ENCODE measurements at regions of chr6 and their contacts with region 1.

Region 1: DNA sequence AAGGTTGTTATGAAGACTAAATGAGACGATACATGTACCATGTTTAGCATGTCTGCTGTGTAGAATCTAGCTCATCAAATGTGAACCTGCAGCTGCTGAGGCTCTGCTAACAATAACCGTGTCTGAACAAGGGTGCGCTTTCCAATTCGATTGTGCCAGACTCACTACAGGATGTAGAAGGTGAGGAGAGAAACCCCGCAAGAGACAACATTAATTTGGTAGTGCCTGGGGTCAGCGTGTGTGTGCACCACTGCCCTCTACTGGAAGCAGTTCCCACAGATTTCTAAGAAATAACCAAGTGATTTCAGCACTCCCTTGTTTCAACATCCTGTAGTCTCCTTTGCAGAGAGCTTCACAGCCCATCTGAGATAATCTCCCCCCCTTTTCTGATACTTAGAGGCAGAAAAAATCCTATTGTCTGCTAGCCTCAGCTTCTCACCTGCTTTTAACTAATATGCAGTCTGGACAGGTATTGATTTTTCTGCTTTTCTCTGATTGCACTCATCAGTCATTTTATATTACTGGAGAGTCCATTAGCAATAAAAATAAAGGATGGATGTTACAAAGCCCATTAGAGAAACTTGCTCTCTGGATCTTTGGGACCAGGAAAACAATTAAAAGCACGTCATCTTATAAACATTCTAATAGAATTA is 96.7 kb upstream of the BACH2 start:
- DNase-seq: peak; percentile 85
- H3K4me3 Mint-ChIP-seq: no peak overlapping the region
- H3K27ac Mint-ChIP-seq: peak overlapping the region; percentile 71
- H3K4me1 Mint-ChIP-seq: peaks cover 78% of the 10 kb centered on the region
- H3K27me3 Mint-ChIP-seq: no peaks in the 10 kb centered on the region

Region 2: DNA sequence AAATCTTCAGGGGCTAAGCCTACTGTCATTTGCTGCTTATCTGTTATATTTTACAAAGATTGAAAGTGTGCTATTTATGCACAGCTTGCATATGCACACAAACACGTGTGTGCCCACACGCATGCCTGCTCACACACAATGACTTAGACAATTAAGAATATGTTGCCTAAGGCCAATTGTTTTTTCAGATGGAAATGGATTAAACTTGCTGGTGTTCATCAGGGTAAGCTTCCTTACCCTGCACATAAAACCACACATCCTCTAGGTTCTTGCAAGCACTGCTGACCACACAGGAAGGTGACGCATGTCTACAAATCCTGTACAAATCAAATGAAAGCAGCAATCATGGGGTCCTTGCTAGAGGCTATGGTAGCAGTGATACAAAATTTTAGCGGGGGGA is 440.7 kb before region 1 on chr6:
- CTCF ChIA-PET with region 1: interaction called, 3 read pairs
- POLR2A ChIA-PET with region 1: no interaction called
- intact Hi-C with region 1: loop called (anchors 2 kb)
- DNase-seq: peak; percentile 72
- H3K4me3 Mint-ChIP-seq: peak overlapping the region; percentile 8
- H3K27ac Mint-ChIP-seq: peak overlapping the region; percentile 69
- H3K4me1 Mint-ChIP-seq: peaks cover 68% of the 10 kb centered on the region
- H3K27me3 Mint-ChIP-seq: no peaks in the 10 kb centered on the region

Region 3: DNA sequence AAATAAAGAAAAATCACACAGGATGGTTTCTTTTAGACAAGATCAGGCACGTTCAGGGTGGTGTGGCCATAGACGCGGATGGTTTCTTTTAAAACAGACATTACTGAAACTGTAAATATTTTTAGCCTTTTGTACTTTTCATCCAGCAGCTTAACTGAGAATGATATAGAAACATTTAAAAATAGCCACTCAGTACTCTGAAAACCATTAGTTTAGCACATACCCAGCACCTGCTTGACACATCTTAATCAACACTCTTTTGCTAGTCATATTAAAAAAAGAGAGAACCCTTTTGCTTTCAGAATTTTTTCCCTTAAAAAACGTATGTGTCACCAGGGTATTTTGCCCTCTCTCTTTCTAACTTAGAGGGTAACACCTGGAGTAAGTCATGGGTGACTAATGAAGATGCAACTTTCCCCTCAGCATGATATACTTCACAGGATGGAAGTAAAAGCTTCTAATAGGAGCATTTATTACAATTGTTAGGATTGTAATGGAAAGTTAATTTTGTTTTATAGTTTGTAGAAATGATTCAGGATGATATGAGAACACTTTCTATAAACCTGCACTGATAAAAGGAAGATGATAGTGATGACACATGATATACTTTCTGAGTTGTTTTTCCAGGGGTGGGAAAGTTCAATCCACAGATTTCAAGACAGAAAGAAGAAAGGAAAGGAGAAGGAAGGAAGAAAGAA is 141.9 kb before region 1 on chr6:
- CTCF ChIA-PET with region 1: interaction called, 3 read pairs
- POLR2A ChIA-PET with region 1: no interaction called
- intact Hi-C with region 1: loop called (anchors 1 kb)
- DNase-seq: no peak
- H3K4me3 Mint-ChIP-seq: no peak overlapping the region
- H3K27ac Mint-ChIP-seq: peak overlapping the region; percentile 83
- H3K4me1 Mint-ChIP-seq: peaks cover 80% of the 10 kb centered on the region
- H3K27me3 Mint-ChIP-seq: no peaks in the 10 kb centered on the region

Region 4: DNA sequence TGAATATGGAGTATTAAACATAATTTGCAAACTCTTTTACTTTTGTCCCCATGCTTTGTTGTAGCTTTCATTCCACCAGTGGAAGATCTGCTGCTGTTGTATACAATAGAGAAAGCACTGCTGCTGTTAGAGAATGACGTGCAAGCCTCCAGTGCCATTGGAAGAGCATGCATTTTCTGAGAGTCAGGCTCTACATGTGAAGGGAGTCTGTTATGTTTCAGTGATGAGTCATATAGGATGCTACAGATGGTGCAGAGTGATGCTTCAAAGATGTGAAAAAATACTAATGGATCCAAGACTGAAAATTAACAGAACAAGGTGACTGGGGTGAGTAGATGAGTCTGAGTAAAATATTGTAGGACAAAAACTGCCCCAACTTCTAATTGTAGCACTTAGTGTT is 74.3 kb before region 1 on chr6:
- CTCF ChIA-PET with region 1: interaction called, 8 read pairs
- POLR2A ChIA-PET with region 1: interaction called, 5 read pairs
- intact Hi-C with region 1: loop called (anchors 1 kb)
- DNase-seq: peak; percentile 51
- H3K4me3 Mint-ChIP-seq: no peak overlapping the region
- H3K27ac Mint-ChIP-seq: peak overlapping the region; percentile 59
- H3K4me1 Mint-ChIP-seq: peaks cover 29% of the 10 kb centered on the region
- H3K27me3 Mint-ChIP-seq: peaks cover 3% of the 10 kb centered on the region

Region 5: DNA sequence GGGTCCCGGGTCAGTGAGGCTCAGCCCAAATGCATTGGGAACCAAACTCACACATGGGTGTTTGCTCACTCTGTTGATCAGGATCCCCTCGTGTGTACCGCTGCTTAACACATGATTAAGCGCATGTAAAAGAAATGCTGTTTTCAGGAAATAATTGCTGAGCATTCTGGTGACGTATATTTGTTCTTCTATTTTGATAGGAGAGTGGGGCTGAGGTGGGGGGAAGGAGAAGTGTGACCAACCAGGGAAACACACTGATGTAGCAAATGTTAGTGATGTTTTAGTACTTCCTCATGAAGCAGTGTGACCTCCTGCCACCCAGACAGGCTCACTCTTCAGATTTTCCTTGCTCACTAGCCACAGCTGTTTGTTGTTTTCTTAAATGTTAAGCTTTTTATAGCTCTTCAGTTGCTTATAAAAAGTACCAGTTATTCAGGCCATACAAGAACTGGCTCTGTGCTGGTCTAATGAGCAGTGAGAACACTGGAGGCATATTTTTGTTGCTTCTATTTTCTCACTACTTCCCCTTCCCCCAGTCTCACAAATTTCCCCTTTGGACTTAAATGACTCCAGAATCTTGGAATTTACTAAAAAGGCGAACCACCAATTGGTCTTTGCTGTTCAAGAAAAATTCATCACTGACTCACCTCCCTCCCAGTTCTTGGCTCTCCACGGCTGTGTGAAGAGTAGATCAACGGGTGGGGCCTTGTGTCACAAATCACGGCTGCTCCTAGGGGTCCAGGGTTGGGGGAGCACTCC is 17.5 kb before region 1 on chr6:
- CTCF ChIA-PET with region 1: interaction called, 15 read pairs
- POLR2A ChIA-PET with region 1: no interaction called
- intact Hi-C with region 1: no loop called
- DNase-seq: no peak
- H3K4me3 Mint-ChIP-seq: no peak overlapping the region
- H3K27ac Mint-ChIP-seq: no peak overlapping the region
- H3K4me1 Mint-ChIP-seq: peaks cover 1% of the 10 kb centered on the region
- H3K27me3 Mint-ChIP-seq: no peaks in the 10 kb centered on the region

Region 6: DNA sequence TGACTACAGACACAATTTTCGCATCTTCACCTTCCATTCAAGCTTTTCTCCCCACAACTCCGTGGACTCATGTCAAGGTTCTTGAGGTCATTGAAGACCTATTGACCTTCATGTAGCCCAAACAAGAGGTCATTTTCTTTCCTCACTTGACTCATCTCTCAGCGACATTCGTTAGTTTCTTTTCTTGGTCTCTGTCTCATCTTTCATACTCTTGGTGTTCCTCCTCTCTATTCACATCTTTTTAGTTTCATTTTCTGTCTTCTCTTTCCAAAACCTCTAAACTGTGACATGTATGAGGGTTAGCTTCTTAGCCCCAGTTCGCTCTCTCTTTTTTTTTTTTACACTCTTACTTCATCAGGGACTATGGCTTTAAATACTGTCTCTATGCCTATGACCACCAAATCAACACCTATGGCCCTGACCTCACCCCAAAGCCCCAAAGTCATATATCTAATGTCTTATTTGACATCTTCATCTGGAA is 31.8 kb after region 1 on chr6:
- CTCF ChIA-PET with region 1: interaction called, 20 read pairs
- POLR2A ChIA-PET with region 1: interaction called, 56 read pairs
- intact Hi-C with region 1: loop called (anchors 1 kb)
- DNase-seq: peak; percentile 52
- H3K4me3 Mint-ChIP-seq: peak overlapping the region; percentile 59
- H3K27ac Mint-ChIP-seq: peak overlapping the region; percentile 95
- H3K4me1 Mint-ChIP-seq: peaks cover 38% of the 10 kb centered on the region
- H3K27me3 Mint-ChIP-seq: no peaks in the 10 kb centered on the region

Region 7: DNA sequence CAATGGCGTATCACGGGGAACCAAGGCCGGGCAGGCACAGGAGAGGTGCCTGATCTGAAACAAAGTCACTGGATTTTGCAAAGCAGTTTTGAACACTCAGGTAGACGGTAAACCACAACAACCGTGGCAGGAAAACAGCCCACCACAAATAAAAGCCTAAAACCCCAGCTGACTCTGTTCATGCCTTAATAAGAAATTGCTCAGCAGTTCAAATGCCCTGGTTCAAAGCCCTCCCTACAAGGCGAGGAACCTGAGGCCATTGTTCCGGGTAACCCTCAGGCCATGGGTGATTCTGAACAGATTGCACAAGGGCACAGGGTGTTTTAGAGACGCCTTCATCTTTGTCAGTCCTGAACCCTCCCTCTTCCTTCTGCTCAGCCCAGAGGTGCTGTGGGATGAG is 79.4 kb after region 1 on chr6:
- CTCF ChIA-PET with region 1: interaction called, 50 read pairs
- POLR2A ChIA-PET with region 1: interaction called, 63 read pairs
- intact Hi-C with region 1: loop called (anchors 1 kb)
- DNase-seq: peak; percentile 69
- H3K4me3 Mint-ChIP-seq: peak overlapping the region; percentile 54
- H3K27ac Mint-ChIP-seq: peak overlapping the region; percentile 83
- H3K4me1 Mint-ChIP-seq: peaks cover 88% of the 10 kb centered on the region
- H3K27me3 Mint-ChIP-seq: peaks cover 1% of the 10 kb centered on the region

Region 8: DNA sequence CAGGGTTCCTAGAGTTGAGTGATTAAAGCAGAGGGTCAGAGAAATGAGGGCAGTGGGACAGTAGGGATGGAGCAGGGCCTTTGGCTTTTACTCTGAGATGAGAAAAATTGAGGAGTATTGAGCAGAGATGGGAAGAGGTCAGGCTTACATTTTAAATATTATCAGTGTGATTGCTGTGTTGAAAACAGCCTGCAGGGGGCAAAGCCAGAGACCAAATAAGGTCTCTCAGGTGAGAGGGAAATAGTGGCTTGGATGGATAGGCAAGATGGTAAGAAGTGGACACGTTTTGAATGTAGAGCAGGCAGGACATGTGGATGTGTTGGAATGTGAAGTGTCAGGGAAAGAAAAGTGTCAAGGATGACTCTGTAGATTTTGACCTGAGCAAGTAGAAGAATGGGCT is 298.5 kb after region 1 on chr6:
- CTCF ChIA-PET with region 1: no interaction called
- POLR2A ChIA-PET with region 1: no interaction called
- intact Hi-C with region 1: no loop called
- DNase-seq: no peak
- H3K4me3 Mint-ChIP-seq: no peak overlapping the region
- H3K27ac Mint-ChIP-seq: no peak overlapping the region
- H3K4me1 Mint-ChIP-seq: no peaks in the 10 kb centered on the region
- H3K27me3 Mint-ChIP-seq: peaks cover 14% of the 10 kb centered on the region

Region 9: DNA sequence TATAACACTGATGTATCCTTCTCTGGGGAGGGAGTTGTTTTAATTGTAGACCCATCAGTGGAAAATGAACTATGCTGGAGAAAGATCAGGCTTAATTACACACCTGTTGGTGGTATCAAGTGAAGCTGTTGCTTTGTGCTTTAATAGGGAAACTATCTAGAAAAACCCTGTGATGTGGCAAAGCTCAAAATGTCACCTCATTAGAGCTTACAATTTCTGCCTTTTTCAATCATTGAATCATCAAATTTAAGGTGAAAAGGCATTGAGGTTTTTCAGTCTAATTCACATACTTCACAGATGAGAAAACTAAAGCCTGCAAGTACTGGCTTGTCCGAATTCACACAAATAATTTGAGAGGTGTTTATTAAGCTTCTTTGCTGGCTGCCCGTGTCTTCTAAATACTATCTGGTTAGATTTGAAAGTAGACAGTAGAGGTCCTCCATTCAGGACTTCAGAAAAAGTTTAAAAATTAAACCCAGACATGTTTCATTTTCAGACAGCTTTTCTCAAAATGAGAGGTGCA is 336.9 kb after region 1 on chr6:
- CTCF ChIA-PET with region 1: no interaction called
- POLR2A ChIA-PET with region 1: no interaction called
- intact Hi-C with region 1: no loop called
- DNase-seq: no peak
- H3K4me3 Mint-ChIP-seq: no peak overlapping the region
- H3K27ac Mint-ChIP-seq: no peak overlapping the region
- H3K4me1 Mint-ChIP-seq: no peaks in the 10 kb centered on the region
- H3K27me3 Mint-ChIP-seq: peaks cover 1% of the 10 kb centered on the region